ENCODE measurements at regions of chr9 and their contacts with region 1.

Region 1: GRCh38 chr9:135951889-135952663 is 9.1 kb downstream of the UBAC1 start:
- DNase-seq: peak; percentile 85
- ATAC-seq: peak; percentile 99
- H3K4me3 ChIP-seq: peak overlapping the region; percentile 30; the same call in 1 of the 2 replicates
- H3K27ac ChIP-seq: peak overlapping the region; percentile 91
- H3K4me1 ChIP-seq: peaks cover 11% of the 10 kb centered on the region
- H3K27me3 ChIP-seq: no peaks in the 10 kb centered on the region
- CTCF ChIP-seq: no peak

Region 2: DNA sequence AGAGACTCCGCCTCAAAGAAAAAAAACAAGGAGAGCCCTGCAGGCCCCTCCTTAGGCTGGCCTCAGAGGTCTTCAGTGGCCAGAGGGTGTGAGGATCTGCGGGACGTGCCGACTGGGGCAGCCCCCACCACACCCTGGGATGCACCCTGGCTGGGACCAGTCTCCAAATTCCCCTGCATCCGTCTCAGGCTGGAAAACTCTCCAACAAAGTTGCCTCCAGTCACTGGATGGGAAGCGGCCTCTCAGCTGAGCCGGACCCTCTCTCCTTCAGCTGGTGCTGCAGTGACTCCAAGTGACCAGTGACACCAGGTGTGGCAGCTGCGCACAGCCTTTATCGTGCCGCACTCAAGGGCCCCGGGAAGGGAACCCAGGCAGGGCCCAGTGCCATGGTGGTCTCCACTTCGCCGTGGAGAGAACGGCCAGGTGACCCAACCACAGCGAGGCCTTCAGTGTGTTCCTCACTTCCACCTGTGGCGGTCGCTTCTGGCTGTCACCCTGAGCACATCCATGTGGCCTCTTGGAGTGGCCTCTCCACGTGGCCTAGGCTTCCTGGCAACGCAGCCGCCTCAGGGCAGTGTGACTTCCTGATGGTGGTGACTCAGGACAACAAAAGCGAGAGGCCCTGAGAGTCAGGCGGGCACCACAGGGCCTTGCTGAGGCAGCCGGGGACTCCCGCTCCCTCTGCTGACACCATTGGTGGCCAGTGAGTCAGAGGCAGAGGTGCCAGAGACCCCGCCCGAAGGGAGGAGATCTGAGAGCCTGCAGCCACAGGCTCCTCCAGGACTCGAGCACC is 25.5 kb before region 1 on chr9:
- CTCF ChIA-PET with region 1: no interaction called
- POLR2A ChIA-PET with region 1: no interaction called
- intact Hi-C with region 1: loop called (anchors 2 kb)
- DNase-seq: peak; percentile 95
- ATAC-seq: peak; percentile 98
- H3K4me3 ChIP-seq: no peak overlapping the region
- H3K27ac ChIP-seq: peak overlapping the region; percentile 75
- H3K4me1 ChIP-seq: peaks cover 17% of the 10 kb centered on the region
- H3K27me3 ChIP-seq: no peaks in the 10 kb centered on the region
- CTCF ChIP-seq: no peak

Measured in PC-3 (cell line).